Mucosa of descending colon (tissue), 3 donors: ENCODE measurements at regions of chr4 and their contacts with region 1.

Region 1: DNA sequence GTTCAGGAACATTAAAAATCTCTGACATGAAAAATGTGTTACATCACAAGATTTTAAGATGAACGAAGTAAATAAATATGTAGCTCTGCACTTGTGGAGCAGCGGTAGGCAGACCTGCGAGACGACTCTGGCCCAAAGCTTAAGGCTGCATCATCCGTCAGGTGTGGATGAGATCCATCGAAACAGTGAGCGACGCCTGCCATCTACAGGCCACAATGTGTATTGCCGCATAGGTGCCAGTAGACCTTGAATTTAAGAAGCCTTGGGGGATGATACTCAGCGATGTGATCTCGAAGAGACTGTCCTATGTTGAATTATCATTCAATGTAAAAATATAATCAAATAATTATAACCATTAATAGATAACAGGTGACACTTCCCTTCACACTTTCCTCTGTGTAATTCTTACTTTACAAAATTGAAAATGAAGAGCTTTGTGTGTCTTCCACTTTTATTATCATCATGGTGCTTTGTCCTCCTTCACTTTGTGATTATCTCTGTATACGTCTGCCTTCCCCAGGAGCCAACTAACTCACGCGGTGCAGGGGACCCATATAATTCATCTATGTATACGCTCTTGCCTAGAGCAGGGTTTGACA is 851.0 kb downstream of the RAB28 start:
- DNase-seq: peak; percentile 61 to 92 (median 89)
- ATAC-seq: peak; percentile 94
- H3K4me3 ChIP-seq: no peak overlapping the region
- H3K4me1 ChIP-seq: no peaks in the 10 kb centered on the region
- CTCF ChIP-seq: peak; percentile 67

Region 2: GRCh38 chr4:11765849-11766453 is 867.2 kb before region 1 on chr4:
- intact Hi-C with region 1: loop called in 1 of 2 experiments (anchors 10 kb)
- DNase-seq: peak in 1 of 3 donors; percentile 63
- ATAC-seq: peak; percentile 64
- H3K4me3 ChIP-seq: no peak overlapping the region
- H3K4me1 ChIP-seq: no peaks in the 10 kb centered on the region
- CTCF ChIP-seq: peak; percentile 44